Activated CD4-positive, alpha-beta memory T cell treated with anti-CD3 and anti-CD28 coated beads for 36 hours (primary cell): ENCODE measurements at regions of chr14 and their contacts with region 1.

Region 1: DNA sequence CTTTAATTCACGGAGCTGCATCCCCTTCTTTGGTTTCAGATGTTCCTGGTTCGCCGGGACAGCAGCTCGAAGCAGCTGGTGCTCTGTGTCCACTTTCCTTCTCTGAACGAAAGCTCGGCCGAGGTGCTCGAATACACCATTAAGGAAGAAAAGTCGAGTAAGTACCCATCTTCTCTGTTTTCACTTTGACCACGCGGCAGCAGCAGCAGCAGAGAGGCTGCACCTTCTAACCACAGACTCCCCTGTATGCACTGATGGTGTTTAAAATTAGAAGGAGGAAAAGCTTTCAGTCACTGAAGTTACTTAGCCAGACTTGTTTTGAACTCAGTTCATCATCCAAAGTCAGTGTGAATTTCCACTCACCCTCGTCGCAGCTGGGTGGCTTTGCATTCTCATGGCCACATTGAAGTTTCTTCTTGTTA is 63.8 kb downstream of the RIN3 start:
- DNase-seq: peak; percentile 53
- H3K4me3 Mint-ChIP-seq: peak overlapping the region; percentile 6
- H3K27ac Mint-ChIP-seq: peak overlapping the region; percentile 34
- H3K4me1 Mint-ChIP-seq: peaks cover 24% of the 10 kb centered on the region
- H3K27me3 Mint-ChIP-seq: no peaks in the 10 kb centered on the region

Region 2: DNA sequence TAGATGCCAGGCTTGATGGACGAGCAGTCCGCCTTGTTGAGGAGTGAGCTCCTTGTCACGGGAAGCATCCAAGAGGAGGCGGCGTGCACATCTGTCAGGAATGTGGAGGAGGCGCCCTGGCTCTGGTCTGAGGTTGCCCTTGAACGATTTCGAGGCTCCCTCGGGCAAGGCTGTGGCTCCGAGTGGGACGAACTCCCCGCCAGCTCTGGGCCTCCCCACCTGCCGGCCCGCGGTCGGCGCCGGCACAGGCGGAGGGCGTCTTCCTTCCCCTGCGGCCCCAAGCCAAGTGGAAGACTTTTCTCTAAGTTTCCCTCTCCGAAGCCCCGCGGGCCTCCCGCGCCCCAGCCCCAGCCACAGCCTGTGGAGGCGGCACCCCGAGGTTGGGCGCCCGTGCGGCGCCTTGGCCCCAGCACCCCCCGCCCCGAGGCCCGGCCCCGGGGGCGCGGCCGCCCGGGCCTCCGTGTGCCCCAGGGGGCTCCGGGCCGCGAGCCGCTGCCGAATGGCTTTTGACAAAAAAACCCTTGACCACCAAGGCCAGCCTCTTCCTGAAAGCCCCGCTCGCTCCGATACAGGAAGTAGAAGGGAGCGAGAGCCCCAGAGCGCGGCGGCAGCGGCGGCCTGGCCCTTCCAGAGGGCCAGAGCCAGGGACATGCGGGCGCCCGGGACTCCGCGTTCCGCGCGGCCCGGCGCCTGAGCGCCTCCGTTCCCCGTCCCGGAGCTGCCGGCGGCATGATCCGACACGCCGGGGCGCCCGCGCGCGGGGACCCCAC is 63.9 kb before region 1 on chr14 and contains the start of gene RIN3:
- CTCF ChIA-PET with region 1: no interaction called
- POLR2A ChIA-PET with region 1: no interaction called
- intact Hi-C with region 1: loop called (anchors 5 kb)
- DNase-seq: peak; percentile 50
- H3K4me3 Mint-ChIP-seq: peak within 1 kb of the TSS; percentile 63
- H3K27ac Mint-ChIP-seq: no peak within 1 kb of the TSS
- H3K4me1 Mint-ChIP-seq: peaks cover 10% of the 10 kb centered on the region
- H3K27me3 Mint-ChIP-seq: peaks cover 5% of the 10 kb centered on the region
- total RNA-seq, gene RIN3: 17.5 to 18.8 TPM

Region 3: DNA sequence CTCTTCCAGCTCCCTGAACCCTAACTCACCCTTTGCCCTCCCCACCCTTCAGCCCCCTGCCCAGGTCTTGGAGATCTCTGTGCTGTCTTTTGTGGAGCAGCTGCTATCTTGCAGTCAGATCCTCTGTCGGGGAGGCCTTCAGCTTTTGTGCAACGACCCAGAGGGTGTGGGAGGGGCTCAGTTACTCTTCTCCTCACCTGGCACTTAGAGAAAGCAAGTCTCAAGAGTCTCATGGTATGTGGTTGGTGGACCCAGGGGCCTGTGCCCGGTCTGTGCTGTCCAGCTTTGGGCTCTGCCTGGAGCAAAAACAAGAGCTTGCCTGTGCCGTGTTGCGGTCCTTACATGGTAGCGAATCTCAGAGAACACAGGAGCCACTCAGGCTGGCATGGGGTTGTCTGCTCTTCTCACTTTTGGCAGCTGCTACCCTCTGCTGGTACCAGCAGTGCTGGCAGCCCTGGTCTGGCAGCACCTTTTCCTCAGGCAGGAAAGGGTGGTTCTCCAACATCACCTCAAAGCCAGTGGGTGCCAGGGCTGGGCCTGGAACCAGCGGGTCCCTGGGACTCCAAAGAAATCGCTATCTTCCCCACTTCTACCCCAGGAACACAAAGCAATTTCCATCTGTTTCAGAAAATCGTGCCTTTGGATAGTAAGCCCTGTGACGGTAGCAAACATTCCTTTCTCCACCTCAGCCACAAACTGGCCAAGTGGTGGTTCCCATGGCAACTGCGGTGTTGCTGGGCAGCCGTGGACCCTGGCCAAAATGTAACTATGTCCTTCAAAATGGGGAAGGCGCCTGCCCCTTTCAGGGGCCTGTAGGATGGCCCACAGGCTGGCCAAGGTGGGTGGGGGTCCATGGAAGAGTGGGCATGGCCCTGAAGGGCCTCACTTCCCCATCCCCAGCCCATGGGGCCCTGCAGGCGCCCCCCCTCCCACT is 26.2 kb after region 1 on chr14:
- CTCF ChIA-PET with region 1: no interaction called
- POLR2A ChIA-PET with region 1: no interaction called
- intact Hi-C with region 1: no loop called
- DNase-seq: peak; percentile 46
- H3K4me3 Mint-ChIP-seq: no peak overlapping the region
- H3K27ac Mint-ChIP-seq: no peak overlapping the region
- H3K4me1 Mint-ChIP-seq: peaks cover 5% of the 10 kb centered on the region
- H3K27me3 Mint-ChIP-seq: no peaks in the 10 kb centered on the region